BJ (cell line): ENCODE measurements at regions of chr1 and their contacts with region 1.

Region 1: DNA sequence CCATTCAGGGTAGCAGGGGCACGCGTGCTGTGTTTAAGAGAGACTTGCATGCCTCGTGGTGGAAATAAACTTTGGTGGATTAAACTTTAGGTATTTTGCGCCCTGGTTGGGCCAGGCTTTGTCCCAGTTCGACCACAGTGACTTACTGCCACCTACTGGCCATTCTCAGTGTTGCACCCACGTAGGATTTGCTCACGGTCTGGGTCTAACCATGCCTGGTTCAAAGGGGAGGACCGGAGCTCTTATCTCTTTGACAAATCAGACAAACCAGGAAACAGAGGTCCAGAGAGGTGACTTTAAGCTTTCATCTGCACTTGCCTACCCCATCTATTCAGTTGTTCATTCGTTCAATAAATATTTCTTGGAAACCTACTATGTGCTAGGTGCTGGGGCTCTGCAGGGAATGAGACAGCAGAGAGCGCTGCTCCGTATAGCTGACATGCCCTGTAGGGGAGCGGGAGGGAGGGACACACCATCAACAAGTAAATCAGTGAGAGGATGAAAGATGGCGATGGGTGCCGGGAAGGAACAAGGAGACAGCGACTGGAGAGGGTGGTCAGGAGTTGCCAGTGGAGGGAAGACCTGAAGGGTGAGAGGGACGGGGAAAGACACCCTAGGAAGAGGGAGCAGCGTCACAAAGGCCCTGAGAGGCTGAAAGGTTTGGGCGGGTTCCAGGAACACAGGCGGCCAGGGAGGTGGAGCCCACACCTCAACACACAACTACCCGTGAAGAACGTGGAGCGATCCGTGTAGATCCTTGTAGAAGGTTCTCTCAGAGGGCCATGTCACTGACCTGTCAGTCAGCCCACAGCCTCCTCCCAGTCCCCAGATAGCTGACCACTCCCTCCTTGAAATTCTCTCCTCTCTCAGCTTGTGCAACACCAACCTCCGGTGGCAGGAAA is 27.2 kb upstream of the TINAGL1 start:
- DNase-seq: no peak
- H3K4me3 ChIP-seq: peak overlapping the region; percentile 16
- H3K27me3 ChIP-seq: no peaks in the 10 kb centered on the region; the same call in 1 of the 2 replicates
- CTCF ChIP-seq: peak; percentile 88

Region 2: GRCh38 chr1:30427545-30427944 is 1121.6 kb before region 1 on chr1:
- CTCF ChIA-PET with region 1: no interaction called
- POLR2A ChIA-PET with region 1: no interaction called
- DNase-seq: no peak
- H3K4me3 ChIP-seq: no peak overlapping the region
- H3K27me3 ChIP-seq: no peaks in the 10 kb centered on the region
- CTCF ChIP-seq: no peak

Region 3: DNA sequence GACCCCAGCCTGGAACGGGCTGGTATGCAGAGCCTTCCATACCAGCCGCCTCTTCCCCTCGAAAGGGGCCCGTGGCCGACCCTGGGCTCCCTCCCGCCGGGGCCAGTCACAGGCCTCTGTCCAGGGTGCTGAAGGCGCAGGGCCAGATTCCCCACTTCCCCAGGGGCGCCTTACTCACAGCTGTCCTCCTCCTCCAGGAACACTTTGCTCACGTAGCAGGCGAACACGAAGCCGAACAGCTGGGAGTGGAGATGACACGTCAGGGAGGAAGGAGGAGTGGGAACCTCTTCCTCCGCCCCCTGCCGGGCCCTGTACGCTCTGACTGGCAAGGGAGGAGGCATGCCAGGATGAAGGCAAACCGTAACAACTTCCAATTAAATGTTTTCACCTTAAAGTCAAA is 366.8 kb before region 1 on chr1:
- CTCF ChIA-PET with region 1: interaction called, 21 read pairs
- POLR2A ChIA-PET with region 1: no interaction called
- DNase-seq: peak; percentile 51
- H3K4me3 ChIP-seq: 0 out of 2 replicates have a peak overlapping the region, but pooled peaks have one; percentile 7
- H3K27me3 ChIP-seq: peaks cover 16% of the 10 kb centered on the region
- CTCF ChIP-seq: peak; percentile 60

Region 4: DNA sequence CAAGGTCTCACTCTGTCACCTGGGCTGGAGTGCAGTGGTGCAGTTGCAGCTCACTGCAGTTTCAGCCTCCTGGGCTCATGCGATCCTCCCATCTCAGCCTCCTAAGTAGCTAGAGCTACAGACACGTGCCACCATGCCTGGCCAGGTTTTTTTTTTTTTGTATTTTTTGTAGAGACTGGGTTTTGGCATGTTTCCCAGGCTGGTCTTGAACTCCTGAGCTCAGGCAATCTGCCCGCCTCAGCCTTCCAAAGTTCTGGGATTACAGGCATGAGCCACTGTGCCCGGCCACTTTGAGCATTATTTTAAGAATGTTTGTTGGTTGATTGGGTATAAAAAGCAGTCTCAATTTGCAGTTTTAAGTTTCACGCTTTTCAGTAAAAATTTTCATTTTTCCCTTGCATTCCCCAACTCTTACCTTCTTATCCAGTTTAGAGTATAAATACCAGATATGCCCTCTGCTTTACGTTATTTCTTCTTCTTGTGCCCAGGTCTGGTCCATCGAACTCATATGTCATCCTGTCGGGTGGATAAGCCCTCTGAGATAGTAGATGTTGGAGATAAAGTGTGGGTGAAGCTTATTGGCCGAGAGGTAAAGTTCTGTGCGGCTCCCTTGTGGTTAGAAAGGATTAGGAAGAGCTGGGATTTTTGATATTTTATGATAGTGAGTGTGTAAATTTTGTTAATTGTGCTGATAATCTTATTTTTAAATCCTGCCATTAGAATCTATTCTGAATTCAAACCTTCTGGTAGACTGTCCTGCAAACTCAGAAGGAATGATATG is 212.3 kb before region 1 on chr1:
- CTCF ChIA-PET with region 1: no interaction called
- POLR2A ChIA-PET with region 1: no interaction called
- DNase-seq: no peak
- H3K4me3 ChIP-seq: no peak overlapping the region
- H3K27me3 ChIP-seq: no peaks in the 10 kb centered on the region
- CTCF ChIP-seq: no peak

Region 5: GRCh38 chr1:31422505-31423319 is 126.4 kb before region 1 on chr1:
- CTCF ChIA-PET with region 1: interaction called, 45 read pairs
- POLR2A ChIA-PET with region 1: no interaction called
- DNase-seq: peak; percentile 31
- H3K4me3 ChIP-seq: no peak overlapping the region
- H3K27me3 ChIP-seq: no peaks in the 10 kb centered on the region
- CTCF ChIP-seq: peak; percentile 95

Region 6: DNA sequence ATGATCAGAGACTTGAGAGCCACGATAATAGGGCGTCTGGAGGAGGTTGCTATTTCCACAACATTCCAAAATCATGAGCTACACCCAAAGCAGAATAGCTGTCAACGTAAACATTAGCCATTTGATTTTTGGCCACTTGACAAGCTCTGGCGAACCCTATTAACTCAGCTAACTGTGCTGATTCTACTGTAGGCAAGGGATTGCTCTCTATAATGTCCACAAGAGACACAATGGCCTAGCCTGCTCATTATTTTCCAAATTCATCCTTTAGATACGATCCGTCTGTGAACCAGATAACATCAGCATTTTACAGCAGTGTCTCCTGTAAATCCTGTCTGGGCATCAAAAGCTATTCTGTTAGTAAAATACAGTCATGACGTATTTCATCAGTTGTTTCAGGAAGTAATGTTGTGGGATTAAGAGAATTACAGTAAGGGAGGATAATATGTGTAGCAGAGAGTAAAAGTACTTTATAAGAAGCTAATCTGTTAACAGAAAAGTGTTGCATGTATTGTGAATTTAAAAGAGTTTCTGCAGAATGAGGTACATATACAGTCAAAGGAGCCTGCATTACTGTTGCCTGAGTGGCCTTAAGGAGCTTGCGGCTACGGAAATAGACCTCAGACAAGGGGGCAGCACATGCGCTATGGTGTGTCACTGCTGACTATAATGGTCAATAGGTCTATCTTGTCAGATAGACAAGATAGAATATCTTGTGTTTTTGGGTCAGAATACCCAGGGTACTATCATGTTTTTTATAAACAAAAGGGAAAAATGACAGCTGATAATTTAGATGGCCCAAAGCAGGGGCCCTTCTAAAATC is 17.8 kb before region 1 on chr1:
- CTCF ChIA-PET with region 1: interaction called, 25 read pairs
- POLR2A ChIA-PET with region 1: no interaction called
- DNase-seq: no peak
- H3K4me3 ChIP-seq: no peak overlapping the region
- H3K27me3 ChIP-seq: peaks cover 1% of the 10 kb centered on the region; the same call in 1 of the 2 replicates
- CTCF ChIP-seq: no peak

Region 7: GRCh38 chr1:31593770-31594632 is 44.8 kb after region 1 on chr1:
- CTCF ChIA-PET with region 1: interaction called, 14 read pairs
- POLR2A ChIA-PET with region 1: no interaction called
- DNase-seq: no peak
- H3K4me3 ChIP-seq: no peak overlapping the region
- H3K27me3 ChIP-seq: no peaks in the 10 kb centered on the region
- CTCF ChIP-seq: peak; percentile 95